Endothelial cell of umbilical vein (primary cell): ENCODE measurements at regions of chr11 and their contacts with region 1.

Region 1: GRCh38 chr11:9688716-9689511 is 25.0 kb downstream of the SWAP70 start:
- DNase-seq: peak; percentile 96
- H3K4me3 ChIP-seq: peak overlapping the region in 2 of 3 experiments; percentile 10 to 31
- H3K27ac ChIP-seq: peak overlapping the region; percentile 98
- H3K4me1 ChIP-seq: peaks cover 66% of the 10 kb centered on the region
- H3K27me3 ChIP-seq: no peaks in the 10 kb centered on the region
- CTCF ChIP-seq: no peak
- POLR2A ChIP-seq: peak; percentile 72

Region 2: GRCh38 chr11:9573052-9573774 is 115.7 kb before region 1 on chr11 and contains the start of gene WEE1:
- CTCF ChIA-PET with region 1: no interaction called
- POLR2A ChIA-PET with region 1: no interaction called
- dilution Hi-C with region 1: no loop called
- intact Hi-C with region 1: loop called (anchors 2 kb)
- DNase-seq: peak; percentile 99
- H3K4me3 ChIP-seq: peak within 1 kb of the TSS; percentile 56 to 97 (median 63)
- H3K27ac ChIP-seq: peak within 1 kb of the TSS; percentile 83
- H3K4me1 ChIP-seq: peaks cover 34% of the 10 kb centered on the region
- H3K27me3 ChIP-seq: no peaks in the 10 kb centered on the region
- CTCF ChIP-seq: no peak
- POLR2A ChIP-seq: peak; percentile 50
- total RNA-seq, gene WEE1: 42.8 and 47.0 TPM in 2 replicates

Region 3: GRCh38 chr11:9626496-9627394 is 62.2 kb before region 1 on chr11:
- CTCF ChIA-PET with region 1: interaction called, 3 read pairs
- POLR2A ChIA-PET with region 1: no interaction called
- dilution Hi-C with region 1: no loop called
- intact Hi-C with region 1: loop called (anchors 1 kb)
- DNase-seq: peak; percentile 96
- H3K4me3 ChIP-seq: peak overlapping the region in 1 of 3 experiments; percentile 19
- H3K27ac ChIP-seq: peak overlapping the region; percentile 96
- H3K4me1 ChIP-seq: peaks cover 33% of the 10 kb centered on the region
- H3K27me3 ChIP-seq: no peaks in the 10 kb centered on the region
- CTCF ChIP-seq: no peak
- POLR2A ChIP-seq: peak; percentile 84

Region 4: GRCh38 chr11:9663699-9664275 is 25.1 kb before region 1 on chr11 and contains the start of gene SWAP70:
- CTCF ChIA-PET with region 1: interaction called, 5 read pairs
- POLR2A ChIA-PET with region 1: no interaction called
- dilution Hi-C with region 1: no loop called
- intact Hi-C with region 1: loop called (anchors 1 kb)
- DNase-seq: peak; percentile 89
- H3K4me3 ChIP-seq: peak within 1 kb of the TSS; percentile 57 to 97 (median 63)
- H3K27ac ChIP-seq: peak within 1 kb of the TSS; percentile 93
- H3K4me1 ChIP-seq: peaks cover 18% of the 10 kb centered on the region
- H3K27me3 ChIP-seq: no peaks in the 10 kb centered on the region
- CTCF ChIP-seq: peak in 1 of 2 donors; percentile 41
- POLR2A ChIP-seq: peak; percentile 89
- total RNA-seq, gene SWAP70: 156 and 165 TPM in 2 replicates

Region 5: DNA sequence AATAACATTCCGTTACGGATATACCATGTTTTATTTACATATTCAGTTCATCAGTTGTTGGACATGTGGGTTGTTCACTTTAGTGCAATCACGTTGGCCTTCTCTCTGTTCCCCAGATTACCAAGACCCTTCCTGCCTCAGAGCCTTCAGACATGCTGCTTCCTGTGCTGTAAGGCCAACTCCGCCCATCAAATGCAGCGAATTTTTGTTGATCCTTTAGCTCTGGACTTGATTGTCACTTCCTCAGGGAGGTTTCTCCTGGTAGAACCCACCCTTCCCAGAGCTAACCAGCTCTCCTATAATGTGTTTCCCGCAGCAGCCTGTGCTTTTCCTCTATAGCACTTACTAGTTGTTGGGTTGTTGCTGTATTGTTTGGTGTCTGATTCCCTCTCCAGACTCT is 14.4 kb after region 1 on chr11:
- CTCF ChIA-PET with region 1: interaction called, 7 read pairs
- POLR2A ChIA-PET with region 1: interaction called, 3 read pairs
- dilution Hi-C with region 1: no loop called
- intact Hi-C with region 1: loop called (anchors 2 kb)
- DNase-seq: peak; percentile 92
- H3K4me3 ChIP-seq: peak overlapping the region in 1 of 3 experiments; percentile 20
- H3K27ac ChIP-seq: peak overlapping the region; percentile 76
- H3K4me1 ChIP-seq: peaks cover 65% of the 10 kb centered on the region
- H3K27me3 ChIP-seq: no peaks in the 10 kb centered on the region
- CTCF ChIP-seq: no peak
- POLR2A ChIP-seq: no peak

Region 6: DNA sequence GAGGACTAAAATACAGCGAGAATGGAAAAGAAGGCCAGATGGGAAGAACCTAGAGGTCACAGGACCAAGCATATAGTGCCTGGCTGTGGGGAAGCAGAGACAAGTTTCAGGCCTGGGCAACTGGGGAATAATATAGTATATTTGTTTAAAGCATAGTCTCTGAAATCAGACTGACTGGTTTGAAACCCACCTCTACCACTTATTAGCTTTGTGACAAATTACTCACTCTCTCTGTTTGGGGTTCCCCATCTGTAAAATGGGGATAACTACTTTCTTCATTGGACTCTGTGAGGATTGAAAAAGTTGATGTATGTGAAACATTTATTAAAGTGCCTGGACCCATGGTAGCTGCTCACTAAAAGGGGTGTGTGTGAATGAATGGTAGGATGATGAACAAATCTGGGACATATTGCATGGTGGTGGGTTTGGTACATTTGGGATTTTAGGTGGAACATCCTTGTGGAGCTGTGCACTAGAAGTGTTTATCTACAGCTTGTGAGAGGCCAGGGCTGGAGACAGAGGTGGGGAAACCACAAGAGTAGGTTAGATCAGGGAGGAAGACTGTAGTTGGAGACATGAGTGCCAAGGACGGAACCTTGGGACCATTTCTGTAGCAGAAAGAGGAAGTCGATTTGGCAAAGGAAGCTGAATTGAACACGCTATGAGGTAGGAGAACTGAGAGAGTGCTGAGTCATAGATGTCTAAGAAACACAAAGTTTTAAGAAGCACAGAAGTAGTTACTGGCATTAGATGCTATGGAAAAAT is 27.5 kb after region 1 on chr11:
- CTCF ChIA-PET with region 1: interaction called, 6 read pairs
- POLR2A ChIA-PET with region 1: interaction called, 6 read pairs
- dilution Hi-C with region 1: no loop called
- intact Hi-C with region 1: loop called (anchors 1 kb)
- DNase-seq: peak; percentile 97
- H3K4me3 ChIP-seq: no peak overlapping the region
- H3K27ac ChIP-seq: peak overlapping the region; percentile 94
- H3K4me1 ChIP-seq: peaks cover 64% of the 10 kb centered on the region
- H3K27me3 ChIP-seq: no peaks in the 10 kb centered on the region
- CTCF ChIP-seq: no peak
- POLR2A ChIP-seq: no peak

Region 7: GRCh38 chr11:9726321-9727022 is 37.6 kb after region 1 on chr11:
- CTCF ChIA-PET with region 1: interaction called, 7 read pairs
- POLR2A ChIA-PET with region 1: interaction called, 3 read pairs
- dilution Hi-C with region 1: no loop called
- intact Hi-C with region 1: loop called (anchors 2 kb)
- DNase-seq: peak; percentile 84
- H3K4me3 ChIP-seq: peak overlapping the region in 1 of 3 experiments; percentile 13
- H3K27ac ChIP-seq: peak overlapping the region; percentile 65
- H3K4me1 ChIP-seq: peaks cover 35% of the 10 kb centered on the region
- H3K27me3 ChIP-seq: no peaks in the 10 kb centered on the region
- CTCF ChIP-seq: no peak
- POLR2A ChIP-seq: peak; percentile 44